GM10248 (cell line): ENCODE measurements at regions of chr12 and their contacts with region 1.

Region 1: DNA sequence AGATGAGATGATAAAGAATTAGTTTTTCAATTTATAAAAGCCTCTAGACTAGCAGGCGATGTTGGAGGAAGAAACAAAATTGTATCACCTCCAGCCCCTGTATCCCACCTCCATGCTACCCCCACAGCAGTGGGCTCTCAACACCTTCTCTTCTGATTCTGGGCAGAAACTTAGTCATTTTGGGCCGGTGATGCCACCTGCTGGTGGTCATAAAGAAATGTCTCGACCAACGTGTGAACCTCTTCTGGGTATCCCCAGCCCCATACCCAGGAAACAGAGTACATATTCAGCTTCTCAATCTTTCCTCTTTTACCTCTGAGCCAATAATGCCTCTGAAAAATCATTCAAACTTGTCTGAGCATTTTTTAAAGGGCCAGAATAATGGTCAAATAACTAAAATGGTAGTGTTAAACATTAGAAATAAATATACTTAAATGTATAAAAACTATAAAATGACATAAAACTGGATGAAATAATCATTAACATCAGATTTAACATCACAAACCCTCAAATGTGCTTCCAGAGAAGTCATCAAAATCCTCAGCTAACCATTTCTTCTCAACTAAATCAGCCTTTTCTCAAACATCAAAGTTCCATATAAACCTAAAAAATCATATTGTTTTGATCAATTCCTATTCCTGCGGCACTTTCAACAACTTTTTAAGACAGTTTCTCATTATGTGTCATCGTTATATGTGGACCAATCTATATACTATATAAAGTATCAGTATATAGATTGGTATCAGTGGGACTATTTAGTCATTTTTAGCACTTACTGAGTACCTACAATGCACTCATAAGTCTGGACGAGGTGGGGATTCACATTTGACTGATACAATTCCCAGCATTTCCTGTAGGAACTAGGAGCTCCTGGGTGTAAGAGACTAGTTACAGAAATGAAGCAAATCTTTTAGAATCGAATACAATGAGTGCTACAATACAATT is 69.4 kb downstream of the ATXN2 start:
- DNase-seq: peak; percentile 81
- CTCF ChIP-seq: peak; percentile 67

Region 2: DNA sequence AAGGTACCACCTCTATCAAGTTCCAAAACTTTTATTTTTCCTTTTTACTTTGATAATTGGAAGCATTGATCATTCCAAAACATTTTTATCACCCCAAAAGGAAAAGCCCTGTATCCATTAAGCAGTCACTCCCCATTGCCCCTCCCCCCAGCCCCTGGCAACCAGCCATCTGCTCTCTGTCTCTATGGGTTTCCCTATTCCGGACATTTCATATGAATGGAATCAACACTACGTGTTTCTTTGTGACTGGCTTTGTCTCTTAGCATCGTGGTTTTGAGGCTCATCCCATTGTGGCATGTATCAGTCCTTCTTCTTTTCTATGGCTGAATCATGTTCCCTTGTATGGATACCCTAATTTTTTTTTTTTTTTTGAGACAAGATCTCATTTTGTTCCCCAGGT is 142.8 kb before region 1 on chr12:
- CTCF ChIA-PET with region 1: no interaction called
- POLR2A ChIA-PET with region 1: no interaction called
- DNase-seq: no peak
- CTCF ChIP-seq: no peak

Region 3: DNA sequence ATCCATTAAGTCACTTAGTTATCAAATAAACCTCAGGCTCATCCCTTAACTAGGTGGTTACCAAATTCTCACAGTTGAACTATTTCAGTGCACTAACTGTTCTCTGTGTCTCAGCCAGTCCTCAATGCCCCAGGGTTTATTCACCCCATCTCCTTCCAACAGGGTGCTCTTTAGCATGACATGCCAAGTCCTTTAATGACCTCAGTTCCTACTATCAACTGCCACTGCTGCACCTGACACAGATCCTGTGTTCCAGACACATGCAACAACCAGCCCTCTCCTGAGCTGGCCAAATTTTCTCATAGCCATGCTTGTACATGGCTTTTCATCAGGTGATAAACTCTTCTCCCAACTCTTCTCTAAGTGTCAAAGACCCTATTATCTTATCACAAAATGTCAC is 10.6 kb before region 1 on chr12:
- CTCF ChIA-PET with region 1: interaction called, 13 read pairs
- POLR2A ChIA-PET with region 1: no interaction called
- DNase-seq: no peak
- CTCF ChIP-seq: no peak

Region 4: DNA sequence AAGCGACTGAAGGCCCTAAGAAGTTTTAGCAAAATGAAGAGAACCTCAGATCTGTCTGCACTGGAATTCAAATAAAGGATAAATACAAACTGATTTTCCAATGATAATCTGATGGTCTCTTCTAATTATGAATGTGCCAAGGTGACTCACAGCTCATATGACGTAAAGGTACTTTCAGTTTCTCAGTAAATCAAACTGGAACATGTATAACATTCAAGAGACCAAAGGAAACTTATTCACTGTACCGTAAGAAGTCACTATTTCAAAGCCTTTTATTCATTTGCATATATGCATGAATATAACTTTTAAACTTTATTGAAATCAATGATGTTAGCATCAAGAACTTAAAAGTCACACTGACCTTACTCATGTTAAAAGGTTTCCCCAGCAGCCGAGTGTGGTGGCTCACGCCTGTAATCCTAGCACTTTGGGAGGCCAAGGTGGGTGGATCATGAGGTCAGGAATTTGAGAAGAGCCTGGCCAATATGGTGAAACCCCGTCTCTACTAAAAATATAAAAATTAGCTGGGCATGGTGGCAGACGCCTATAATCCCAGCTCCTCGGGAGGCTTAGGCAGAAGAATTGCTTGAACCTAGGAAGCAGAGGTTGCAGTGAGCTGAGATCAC is 17.2 kb after region 1 on chr12:
- CTCF ChIA-PET with region 1: interaction called, 12 read pairs
- POLR2A ChIA-PET with region 1: no interaction called
- DNase-seq: peak; percentile 24
- CTCF ChIP-seq: no peak